ENCODE measurements at regions of chr12 and their contacts with region 1.

Region 1: GRCh38 chr12:12356886-12357718 is at the start of gene BORCS5:
- DNase-seq: peak; percentile 99
- ATAC-seq: peak; percentile 90
- H3K4me3 Mint-ChIP-seq: peak within 1 kb of the TSS; percentile 92
- H3K27ac Mint-ChIP-seq: peak within 1 kb of the TSS; percentile 98
- H3K4me1 Mint-ChIP-seq: peaks cover 38% of the 10 kb centered on the region
- H3K27me3 Mint-ChIP-seq: no peaks in the 10 kb centered on the region
- CTCF ChIP-seq: no peak
- total RNA-seq, gene BORCS5: 19.5 and 22.7 TPM in 2 replicates

Region 2: DNA sequence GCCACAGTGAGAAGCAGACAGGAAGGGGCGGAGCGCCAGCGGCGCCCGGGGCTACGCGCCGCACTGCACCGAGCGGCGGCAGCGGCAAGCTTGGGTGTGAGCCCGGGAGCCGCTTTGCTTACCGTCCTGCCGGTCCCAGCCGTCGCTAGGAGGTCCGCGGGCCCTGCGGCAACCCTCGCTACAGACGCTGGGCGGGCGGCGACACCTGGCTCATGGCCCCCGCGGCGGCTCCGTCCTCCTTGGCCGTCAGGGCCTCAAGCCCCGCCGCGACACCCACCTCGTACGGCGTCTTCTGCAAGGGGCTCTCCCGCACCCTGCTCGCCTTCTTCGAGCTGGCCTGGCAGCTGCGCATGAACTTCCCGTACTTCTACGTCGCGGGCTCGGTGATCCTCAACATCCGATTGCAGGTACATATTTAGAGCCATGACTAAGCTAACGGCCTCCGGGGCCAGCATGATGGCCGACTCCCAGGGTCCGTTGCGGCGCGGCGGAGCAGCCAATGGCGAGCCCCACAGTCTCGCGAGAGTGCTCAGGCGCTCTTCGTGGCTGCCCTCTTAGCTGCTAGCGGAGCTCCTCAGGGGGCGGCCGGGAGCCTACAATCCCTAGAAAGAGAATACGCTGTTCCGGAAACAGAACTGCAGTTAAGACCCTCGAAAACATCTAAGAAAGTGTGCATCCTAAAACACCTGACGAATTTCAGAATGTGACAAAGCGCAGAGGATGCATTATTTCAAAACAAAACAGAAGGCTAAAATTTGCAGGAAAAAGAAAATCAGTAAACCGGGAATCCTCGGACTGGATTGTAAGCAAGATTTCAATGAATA is 1185.7 kb before region 1 on chr12 and contains the start of gene SMIM10L1:
- CTCF ChIA-PET with region 1: no interaction called
- POLR2A ChIA-PET with region 1: interaction called, 3 read pairs
- intact Hi-C with region 1: loop called (anchors 1 kb)
- DNase-seq: peak; percentile 75
- ATAC-seq: peak; percentile 96
- H3K4me3 Mint-ChIP-seq: peak within 1 kb of the TSS; percentile 97
- H3K27ac Mint-ChIP-seq: peak within 1 kb of the TSS; percentile 95
- H3K4me1 Mint-ChIP-seq: peaks cover 52% of the 10 kb centered on the region
- H3K27me3 Mint-ChIP-seq: no peaks in the 10 kb centered on the region
- CTCF ChIP-seq: no peak
- total RNA-seq, gene SMIM10L1: 7.3 and 8.8 TPM in 2 replicates

Region 3: GRCh38 chr12:12376646-12377448 is 19.7 kb after region 1 on chr12:
- CTCF ChIA-PET with region 1: interaction called, 12 read pairs
- POLR2A ChIA-PET with region 1: interaction called, 13 read pairs
- intact Hi-C with region 1: loop called (anchors 1 kb)
- DNase-seq: no peak
- ATAC-seq: peak; percentile 83
- H3K4me3 Mint-ChIP-seq: no peak overlapping the region
- H3K27ac Mint-ChIP-seq: no peak overlapping the region
- H3K4me1 Mint-ChIP-seq: peaks cover 19% of the 10 kb centered on the region
- H3K27me3 Mint-ChIP-seq: no peaks in the 10 kb centered on the region
- CTCF ChIP-seq: no peak

Region 4: DNA sequence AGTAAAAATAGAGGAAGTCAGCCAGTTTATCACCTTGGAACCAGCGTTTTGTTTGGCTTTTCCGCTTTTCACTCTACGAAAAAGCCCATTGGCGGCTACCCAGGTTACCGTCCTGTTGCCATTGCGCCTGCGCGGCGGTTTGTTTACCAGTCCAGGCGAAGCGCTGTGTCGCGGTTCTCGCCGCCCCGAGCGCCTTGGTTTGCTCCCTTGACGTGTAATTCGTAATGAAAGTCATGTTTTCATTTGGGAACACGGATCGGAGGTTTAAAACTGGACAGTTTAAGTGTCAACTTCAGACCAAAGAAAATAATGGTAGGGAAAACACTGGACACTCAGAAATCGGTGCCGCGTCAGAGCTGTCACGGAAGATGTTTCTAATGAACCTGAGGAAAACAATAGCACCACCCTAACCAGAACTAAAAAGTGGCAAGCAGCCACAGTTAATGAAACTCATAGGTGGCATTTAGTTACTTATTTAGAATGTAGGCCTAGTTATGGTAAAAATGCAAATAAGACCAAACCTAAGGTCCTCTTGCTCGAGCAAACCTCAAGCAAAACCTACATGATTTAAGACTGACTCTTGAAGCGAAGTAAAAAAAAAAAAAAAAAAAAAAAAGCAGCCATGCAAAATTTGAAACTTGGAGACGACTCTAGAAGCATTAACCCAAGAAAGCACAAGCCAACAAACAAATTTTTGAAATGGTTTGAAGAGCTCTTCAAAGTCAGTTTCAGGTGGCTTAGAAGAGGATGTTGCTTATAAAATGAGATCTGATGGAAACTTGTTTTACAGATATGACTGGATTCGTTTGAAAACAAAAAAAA is 339.7 kb after region 1 on chr12:
- CTCF ChIA-PET with region 1: no interaction called
- POLR2A ChIA-PET with region 1: interaction called, 25 read pairs
- intact Hi-C with region 1: loop called (anchors 1 kb)
- DNase-seq: peak; percentile 78
- ATAC-seq: peak; percentile 80
- H3K4me3 Mint-ChIP-seq: peak overlapping the region; percentile 96
- H3K27ac Mint-ChIP-seq: peak overlapping the region; percentile 99
- H3K4me1 Mint-ChIP-seq: peaks cover 33% of the 10 kb centered on the region
- H3K27me3 Mint-ChIP-seq: no peaks in the 10 kb centered on the region
- CTCF ChIP-seq: no peak

Region 5: GRCh38 chr12:12736759-12737676 is 379.9 kb after region 1 on chr12:
- CTCF ChIA-PET with region 1: interaction called, 19 read pairs
- POLR2A ChIA-PET with region 1: interaction called, 17 read pairs
- intact Hi-C with region 1: no loop called
- DNase-seq: peak; percentile 19
- ATAC-seq: peak; percentile 91
- H3K4me3 Mint-ChIP-seq: peak overlapping the region; percentile 30
- H3K27ac Mint-ChIP-seq: peak overlapping the region; percentile 72
- H3K4me1 Mint-ChIP-seq: peaks cover 13% of the 10 kb centered on the region
- H3K27me3 Mint-ChIP-seq: no peaks in the 10 kb centered on the region
- CTCF ChIP-seq: peak; percentile 19

Region 6: DNA sequence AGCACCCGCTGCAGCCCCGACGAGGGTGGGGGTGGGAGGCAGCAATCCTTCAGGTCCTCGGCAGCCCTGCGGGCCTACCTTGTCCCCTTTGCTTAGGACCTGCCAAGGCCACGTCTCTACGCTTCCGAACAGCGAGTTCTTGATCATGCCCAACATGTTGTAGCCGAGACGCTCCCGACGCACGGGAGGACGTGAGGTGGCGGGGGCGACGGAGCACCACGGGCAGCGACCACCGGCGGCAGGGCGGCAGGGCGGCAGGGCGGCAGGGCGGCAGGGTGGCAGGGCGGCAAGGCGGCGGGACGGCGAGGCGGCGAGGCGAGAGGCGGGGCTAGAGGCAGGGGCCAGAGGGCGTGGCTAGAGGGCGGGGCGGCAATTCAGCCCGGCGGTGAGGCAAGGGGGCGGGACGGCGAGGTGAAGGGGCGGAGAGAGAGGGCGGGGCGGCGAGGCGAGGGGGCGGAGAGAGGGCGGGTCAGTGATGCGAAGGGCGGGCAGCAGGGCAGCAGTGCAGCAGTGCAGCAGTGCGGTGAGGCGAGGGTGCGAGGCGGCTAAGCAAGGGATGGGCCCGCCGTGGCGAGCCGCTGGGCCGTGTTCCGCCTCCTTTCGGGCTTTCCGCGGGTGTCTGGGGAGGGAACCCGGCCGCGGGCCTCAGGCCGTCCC is 643.0 kb after region 1 on chr12 and contains the start of gene HEBP1:
- CTCF ChIA-PET with region 1: no interaction called
- POLR2A ChIA-PET with region 1: interaction called, 3 read pairs
- intact Hi-C with region 1: loop called (anchors 1 kb)
- DNase-seq: peak; percentile 97
- ATAC-seq: peak; percentile 92
- H3K4me3 Mint-ChIP-seq: peak within 1 kb of the TSS; percentile 87
- H3K27ac Mint-ChIP-seq: peak within 1 kb of the TSS; percentile 84
- H3K4me1 Mint-ChIP-seq: peaks cover 27% of the 10 kb centered on the region
- H3K27me3 Mint-ChIP-seq: no peaks in the 10 kb centered on the region
- CTCF ChIP-seq: no peak
- total RNA-seq, gene HEBP1: 9.7 and 12.0 TPM in 2 replicates